Panc1 (cell line): ENCODE measurements at regions of chr16 and their contacts with region 1.

Region 1: GRCh38 chr16:65781363-65781762 is 585.1 kb upstream of the CDH5 start:
- DNase-seq: no peak
- ATAC-seq: no peak
- H3K4me3 ChIP-seq: no peak overlapping the region
- H3K27ac ChIP-seq: no peak overlapping the region
- H3K4me1 ChIP-seq: no peaks in the 10 kb centered on the region
- H3K27me3 ChIP-seq: no peaks in the 10 kb centered on the region
- CTCF ChIP-seq: no peak

Region 2: DNA sequence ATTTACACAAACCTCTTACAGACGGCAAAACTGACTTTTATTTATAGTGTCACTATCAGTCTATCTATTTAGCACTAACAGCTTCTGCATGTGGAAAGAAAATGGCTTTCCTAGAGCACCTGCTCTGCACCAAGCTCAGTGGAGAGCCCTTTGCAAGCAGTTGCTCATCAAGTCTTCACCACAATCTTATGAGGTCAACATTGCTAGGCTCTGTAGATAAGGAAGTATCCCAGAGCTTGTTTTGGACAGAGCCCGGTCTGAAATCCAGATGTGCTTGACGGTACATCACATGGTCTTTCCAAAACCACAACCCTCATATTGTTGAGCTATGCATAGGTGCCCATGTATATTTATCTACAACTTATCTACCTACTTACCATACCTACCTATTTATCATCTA is 12.4 kb after region 1 on chr16:
- CTCF ChIA-PET with region 1: no interaction called
- POLR2A ChIA-PET with region 1: no interaction called
- in situ Hi-C with region 1: no loop called
- intact Hi-C with region 1: no loop called
- DNase-seq: no peak
- ATAC-seq: no peak
- H3K4me3 ChIP-seq: no peak overlapping the region
- H3K27ac ChIP-seq: no peak overlapping the region
- H3K4me1 ChIP-seq: no peaks in the 10 kb centered on the region
- H3K27me3 ChIP-seq: no peaks in the 10 kb centered on the region
- CTCF ChIP-seq: no peak

Region 3: DNA sequence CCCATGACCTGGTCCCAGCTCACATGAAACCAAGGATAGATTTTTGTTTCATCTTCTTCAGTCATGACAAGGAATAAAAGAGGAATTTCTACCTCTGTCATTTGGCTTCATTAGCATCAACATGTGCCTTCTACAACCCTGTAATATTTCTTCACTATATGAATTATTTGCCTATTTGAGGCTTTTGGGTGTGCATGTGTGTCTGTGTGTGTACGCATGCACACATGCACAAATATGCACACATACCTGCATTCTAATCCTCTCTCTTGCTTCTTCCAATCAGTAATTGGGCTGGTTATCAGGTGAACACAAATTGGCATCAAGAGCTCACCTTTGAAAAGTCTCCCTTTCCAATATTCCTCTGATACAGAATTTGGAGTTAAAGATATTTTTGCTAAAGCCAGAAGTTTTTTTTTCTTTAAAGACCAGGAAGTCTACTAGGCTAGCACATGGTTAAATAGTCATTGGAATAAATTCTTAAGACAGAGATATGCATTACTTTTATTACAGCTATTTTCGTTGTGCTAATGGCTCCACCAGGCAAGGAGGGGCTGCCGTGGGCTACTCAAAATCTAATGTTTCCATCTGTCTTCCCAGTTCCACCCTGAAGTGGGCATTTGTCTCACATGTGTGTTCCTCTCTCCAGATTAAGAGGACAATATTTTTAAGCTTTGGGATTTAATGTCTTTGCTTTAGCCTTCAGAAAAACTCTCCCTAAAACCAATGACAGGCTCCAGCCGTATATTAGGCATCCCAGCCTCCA is 38.0 kb after region 1 on chr16:
- CTCF ChIA-PET with region 1: no interaction called
- POLR2A ChIA-PET with region 1: no interaction called
- in situ Hi-C with region 1: no loop called
- intact Hi-C with region 1: loop called (anchors 2 kb)
- DNase-seq: no peak
- ATAC-seq: no peak
- H3K4me3 ChIP-seq: no peak overlapping the region
- H3K27ac ChIP-seq: no peak overlapping the region
- H3K4me1 ChIP-seq: no peaks in the 10 kb centered on the region
- H3K27me3 ChIP-seq: no peaks in the 10 kb centered on the region
- CTCF ChIP-seq: no peak

Region 4: GRCh38 chr16:65909310-65910050 is 128.1 kb after region 1 on chr16:
- CTCF ChIA-PET with region 1: no interaction called
- POLR2A ChIA-PET with region 1: no interaction called
- in situ Hi-C with region 1: no loop called
- intact Hi-C with region 1: no loop called
- DNase-seq: no peak
- ATAC-seq: no peak
- H3K4me3 ChIP-seq: no peak overlapping the region
- H3K27ac ChIP-seq: no peak overlapping the region
- H3K4me1 ChIP-seq: no peaks in the 10 kb centered on the region
- H3K27me3 ChIP-seq: no peaks in the 10 kb centered on the region; the same call in 1 of the 2 replicates
- CTCF ChIP-seq: no peak